ENCODE measurements at regions of chr3 and their contacts with region 1.

Region 1: GRCh38 chr3:33372218-33373081 is 67.8 kb downstream of the UBP1 start:
- DNase-seq: peak in 1 of 6 donors; percentile 44
- ATAC-seq: peak; percentile 70 to 95 (median 90)
- H3K4me3 ChIP-seq: no peak overlapping the region
- H3K27ac ChIP-seq: no peak overlapping the region
- H3K4me1 ChIP-seq: peaks cover 0 to 4% (median 0%) of the 10 kb centered on the region in 3 donors
- H3K27me3 ChIP-seq: no peaks in the 10 kb centered on the region
- CTCF ChIP-seq: peak; percentile 55 to 83 (median 74)

Region 2: GRCh38 chr3:33128706-33129105 is 243.7 kb before region 1 on chr3:
- intact Hi-C with region 1: loop called in 1 of 3 experiments (anchors 5 kb)
- DNase-seq: no peak
- ATAC-seq: no peak
- H3K4me3 ChIP-seq: no peak overlapping the region
- H3K27ac ChIP-seq: no peak overlapping the region
- H3K4me1 ChIP-seq: no peaks in the 10 kb centered on the region
- H3K27me3 ChIP-seq: no peaks in the 10 kb centered on the region
- CTCF ChIP-seq: no peak

Region 3: DNA sequence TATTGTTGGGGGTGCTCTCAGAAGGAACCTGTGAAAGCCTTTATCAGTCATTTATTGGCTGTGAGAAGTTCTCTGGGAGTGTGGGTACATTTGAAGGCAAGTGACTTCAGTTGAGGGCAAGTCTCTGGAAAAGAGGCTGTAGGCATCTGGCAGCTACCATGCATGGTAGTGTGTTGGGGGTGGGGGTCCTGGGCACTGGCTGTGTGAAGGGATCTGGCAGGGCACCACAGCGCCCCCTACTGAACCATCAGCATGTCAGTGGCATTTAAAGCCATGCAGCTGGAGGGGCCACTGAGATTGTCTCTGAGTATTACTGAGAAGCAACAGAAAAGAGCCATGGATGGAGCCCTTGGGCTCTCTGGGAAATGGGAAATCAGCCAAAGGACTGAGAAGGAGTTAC is 228.0 kb before region 1 on chr3:
- intact Hi-C with region 1: loop called in 1 of 3 experiments (anchors 10 kb)
- DNase-seq: no peak
- ATAC-seq: no peak
- H3K4me3 ChIP-seq: no peak overlapping the region
- H3K27ac ChIP-seq: no peak overlapping the region
- H3K4me1 ChIP-seq: no peaks in the 10 kb centered on the region
- H3K27me3 ChIP-seq: no peaks in the 10 kb centered on the region
- CTCF ChIP-seq: peak in 2 of 4 donors; percentile 9 to 11

Region 4: DNA sequence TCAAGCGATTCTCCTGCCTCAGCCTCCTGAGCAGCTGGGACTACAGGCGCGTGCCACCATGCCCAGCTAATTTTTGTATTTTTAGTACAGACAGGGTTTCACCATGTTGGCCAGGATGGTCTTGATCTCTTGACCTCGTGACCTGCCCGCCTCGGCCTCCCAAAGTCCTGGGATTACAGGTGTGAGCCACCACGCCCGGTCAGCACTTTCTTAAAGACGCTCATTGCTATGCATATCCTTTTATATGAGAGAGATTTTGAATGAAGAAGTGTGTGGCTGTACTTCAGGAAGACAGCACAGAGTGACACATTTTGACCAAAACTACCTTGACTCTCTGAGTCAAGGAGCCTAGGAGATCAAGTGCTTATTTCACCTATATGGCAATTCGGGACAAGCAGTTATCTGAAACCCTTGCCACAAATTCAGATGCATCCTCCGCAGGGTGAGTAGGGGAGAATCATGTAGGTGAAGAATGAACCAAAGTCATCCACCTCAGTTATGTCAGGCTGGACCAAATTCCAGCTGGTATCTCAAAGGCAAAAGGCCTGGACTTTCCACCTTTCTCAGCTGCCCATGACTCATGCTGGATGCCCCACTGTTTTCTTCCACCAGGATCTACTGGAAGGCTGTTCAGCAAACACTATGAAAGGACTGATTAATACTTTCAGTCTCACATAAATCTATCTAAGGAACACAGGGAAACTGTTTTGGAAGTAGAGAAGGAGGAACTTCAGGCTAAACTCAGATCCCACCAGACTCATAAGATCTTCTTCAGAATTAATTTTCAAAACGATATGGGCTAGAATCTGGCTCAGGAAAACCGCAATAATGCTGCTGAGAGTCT is 185.7 kb before region 1 on chr3:
- intact Hi-C with region 1: no loop called
- DNase-seq: no peak
- ATAC-seq: peak in 1 of 4 donors; percentile 44
- H3K4me3 ChIP-seq: no peak overlapping the region
- H3K27ac ChIP-seq: no peak overlapping the region
- H3K4me1 ChIP-seq: no peaks in the 10 kb centered on the region
- H3K27me3 ChIP-seq: no peaks in the 10 kb centered on the region
- CTCF ChIP-seq: no peak

Region 5: GRCh38 chr3:33240261-33240660 is 132.2 kb before region 1 on chr3:
- intact Hi-C with region 1: no loop called
- DNase-seq: no peak
- ATAC-seq: no peak
- H3K4me3 ChIP-seq: no peak overlapping the region
- H3K27ac ChIP-seq: no peak overlapping the region
- H3K4me1 ChIP-seq: no peaks in the 10 kb centered on the region
- H3K27me3 ChIP-seq: no peaks in the 10 kb centered on the region
- CTCF ChIP-seq: no peak

Measured in pancreas (tissue), 10 donors.